H1 (cell line): ENCODE measurements at regions of chr1 and their contacts with region 1.

Region 1: GRCh38 chr1:48677306-48678287 is 99.1 kb downstream of the BEND5 start:
- DNase-seq: peak; percentile 29 to 74
- H3K4me3 ChIP-seq: no peak overlapping the region
- H3K27ac ChIP-seq: no peak overlapping the region
- H3K4me1 ChIP-seq: peaks cover 2 to 6% (median 5%) of the 10 kb centered on the region in 4 experiments; a peak in 5 of 7 replicates
- H3K27me3 ChIP-seq: peaks cover 0 to 2% (median 0%) of the 10 kb centered on the region in 4 experiments; a peak in 1 of 7 replicates
- CTCF ChIP-seq: peak; percentile 79 to 84 (median 81)
- EP300 ChIP-seq: no peak
- POLR2A ChIP-seq: no peak
- RAD21 ChIP-seq: peak; percentile 52 to 66

Region 2: GRCh38 chr1:48462716-48463302 is 214.8 kb before region 1 on chr1:
- CTCF ChIA-PET with region 1: no interaction called
- POLR2A ChIA-PET with region 1: no interaction called
- DNase-seq: no peak
- H3K4me3 ChIP-seq: no peak overlapping the region
- H3K27ac ChIP-seq: no peak overlapping the region
- H3K4me1 ChIP-seq: peaks cover 0 to 5% (median under 1%) of the 10 kb centered on the region in 4 experiments; a peak in 1 of 7 replicates
- H3K27me3 ChIP-seq: peaks cover 0 to 1% (median 0%) of the 10 kb centered on the region in 4 experiments; a peak in 1 of 7 replicates
- CTCF ChIP-seq: no peak
- EP300 ChIP-seq: no peak
- POLR2A ChIP-seq: no peak
- RAD21 ChIP-seq: no peak

Region 3: GRCh38 chr1:48572646-48573261 is 104.8 kb before region 1 on chr1:
- CTCF ChIA-PET with region 1: interaction called, 83 read pairs
- POLR2A ChIA-PET with region 1: no interaction called
- DNase-seq: peak; percentile 79 to 80
- H3K4me3 ChIP-seq: no peak overlapping the region
- H3K27ac ChIP-seq: no peak overlapping the region
- H3K4me1 ChIP-seq: peaks cover 0 to 4% (median 0%) of the 10 kb centered on the region in 4 experiments; a peak in 1 of 7 replicates
- H3K27me3 ChIP-seq: no peaks in the 10 kb centered on the region
- CTCF ChIP-seq: peak; percentile 94 to 99 (median 96)
- EP300 ChIP-seq: no peak
- POLR2A ChIP-seq: no peak
- RAD21 ChIP-seq: peak; percentile 99 to 100

Region 4: DNA sequence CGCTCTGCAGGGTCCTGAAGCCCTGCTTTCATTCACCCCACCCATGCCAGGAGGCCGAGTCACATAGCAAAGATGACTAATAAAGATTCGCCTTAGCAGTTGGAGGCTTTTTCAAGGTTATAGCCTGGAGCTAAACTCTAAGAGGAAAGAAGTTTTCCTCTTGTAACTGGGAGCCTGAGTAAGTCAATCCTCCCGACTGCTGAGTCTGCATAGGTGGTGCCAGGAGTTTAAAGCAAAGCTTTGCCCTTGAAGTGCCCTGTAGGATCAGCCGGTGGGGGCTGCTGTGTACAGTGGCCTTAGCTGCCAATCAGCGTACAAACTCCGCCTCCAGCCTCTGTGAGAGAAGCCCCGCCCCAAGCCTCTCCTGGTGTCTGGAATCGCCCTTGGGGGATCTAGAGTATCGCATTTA is 58.1 kb before region 1 on chr1:
- CTCF ChIA-PET with region 1: interaction called, 10 read pairs
- POLR2A ChIA-PET with region 1: no interaction called
- DNase-seq: peak; percentile 46 to 83
- H3K4me3 ChIP-seq: peak overlapping the region in 1 of 4 experiments; percentile 23; a peak in 2 of 8 replicates
- H3K27ac ChIP-seq: no peak overlapping the region
- H3K4me1 ChIP-seq: peaks cover 2 to 13% (median 4%) of the 10 kb centered on the region in 4 experiments; a peak in 3 of 7 replicates
- H3K27me3 ChIP-seq: no peaks in the 10 kb centered on the region
- CTCF ChIP-seq: no peak
- EP300 ChIP-seq: no peak
- POLR2A ChIP-seq: no peak
- RAD21 ChIP-seq: no peak

Region 5: GRCh38 chr1:48654606-48655210 is 22.9 kb before region 1 on chr1:
- CTCF ChIA-PET with region 1: interaction called, 225 read pairs
- POLR2A ChIA-PET with region 1: interaction called, 4 read pairs
- DNase-seq: no peak
- H3K4me3 ChIP-seq: no peak overlapping the region
- H3K27ac ChIP-seq: no peak overlapping the region
- H3K4me1 ChIP-seq: no peaks in the 10 kb centered on the region
- H3K27me3 ChIP-seq: no peaks in the 10 kb centered on the region; a peak in 1 of 7 replicates
- CTCF ChIP-seq: no peak
- EP300 ChIP-seq: no peak
- POLR2A ChIP-seq: no peak
- RAD21 ChIP-seq: no peak

Region 6: GRCh38 chr1:48697066-48697707 is 19.6 kb after region 1 on chr1:
- CTCF ChIA-PET with region 1: interaction called, 203 read pairs
- POLR2A ChIA-PET with region 1: no interaction called
- DNase-seq: peak in 1 of 2 experiments; percentile 97
- H3K4me3 ChIP-seq: no peak overlapping the region
- H3K27ac ChIP-seq: no peak overlapping the region
- H3K4me1 ChIP-seq: no peaks in the 10 kb centered on the region
- H3K27me3 ChIP-seq: no peaks in the 10 kb centered on the region
- CTCF ChIP-seq: peak; percentile 78 to 89 (median 84)
- EP300 ChIP-seq: no peak
- POLR2A ChIP-seq: no peak
- RAD21 ChIP-seq: peak; percentile 64 to 77

Region 7: DNA sequence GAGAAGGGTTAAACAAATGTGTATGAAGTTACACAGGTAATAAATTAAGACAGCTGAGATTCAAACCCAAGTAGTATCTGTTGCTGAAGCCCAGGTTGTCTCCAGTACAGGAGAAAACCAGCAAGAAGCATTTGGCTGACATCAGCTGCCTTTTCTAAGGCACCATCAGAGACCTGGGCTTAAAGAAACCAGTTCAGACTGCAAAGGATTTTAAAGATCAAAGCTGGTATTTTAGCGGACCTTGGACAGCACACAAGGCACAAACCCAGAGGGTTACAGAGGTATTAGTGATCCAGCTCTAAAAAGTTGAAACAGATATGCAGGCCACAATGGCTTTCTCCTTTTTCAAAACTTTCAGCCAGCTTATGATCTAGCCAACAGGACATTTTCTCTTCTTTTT is 75.7 kb after region 1 on chr1:
- CTCF ChIA-PET with region 1: no interaction called
- POLR2A ChIA-PET with region 1: no interaction called
- DNase-seq: no peak
- H3K4me3 ChIP-seq: no peak overlapping the region
- H3K27ac ChIP-seq: no peak overlapping the region
- H3K4me1 ChIP-seq: no peaks in the 10 kb centered on the region; a peak in 1 of 7 replicates
- H3K27me3 ChIP-seq: no peaks in the 10 kb centered on the region
- CTCF ChIP-seq: no peak
- EP300 ChIP-seq: no peak
- POLR2A ChIP-seq: no peak
- RAD21 ChIP-seq: no peak

Region 8: DNA sequence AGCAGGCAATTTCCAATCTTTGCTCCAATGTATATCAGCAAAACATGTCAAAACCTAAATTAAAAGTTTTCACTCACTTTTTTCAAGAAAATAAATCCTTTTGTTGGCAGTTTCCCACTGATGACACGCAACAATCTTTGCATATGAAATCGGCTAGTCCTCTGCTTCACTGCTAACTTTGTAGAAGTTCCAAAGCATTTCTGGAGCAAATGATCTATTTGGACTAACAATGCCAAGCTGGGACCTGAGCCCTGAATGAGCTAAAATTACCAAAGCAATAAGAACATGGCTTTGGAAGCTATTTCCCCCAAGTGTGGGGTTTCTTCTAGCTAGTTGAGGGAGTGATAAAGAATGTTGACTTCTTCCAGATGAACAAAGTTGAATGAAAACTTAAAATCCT is 94.0 kb after region 1 on chr1:
- CTCF ChIA-PET with region 1: interaction called, 10 read pairs
- POLR2A ChIA-PET with region 1: no interaction called
- DNase-seq: no peak
- H3K4me3 ChIP-seq: no peak overlapping the region
- H3K27ac ChIP-seq: no peak overlapping the region
- H3K4me1 ChIP-seq: peaks cover 0 to 4% (median 0%) of the 10 kb centered on the region in 4 experiments; a peak in 1 of 7 replicates
- H3K27me3 ChIP-seq: no peaks in the 10 kb centered on the region
- CTCF ChIP-seq: no peak
- EP300 ChIP-seq: no peak
- POLR2A ChIP-seq: no peak
- RAD21 ChIP-seq: no peak